ENCODE measurements at regions of chr4 and their contacts with region 1.

Region 1: GRCh38 chr4:72701987-72702819 is 133.2 kb upstream of the ADAMTS3 start:
- DNase-seq: peak in 2 of 9 experiments; percentile 41 to 51
- ATAC-seq: no peak
- H3K4me3 ChIP-seq: peak overlapping the region; percentile 21 to 25
- H3K4me3 Mint-ChIP-seq: peak overlapping the region; percentile 79
- H3K27ac ChIP-seq: no peak overlapping the region
- H3K27ac Mint-ChIP-seq: no peak overlapping the region
- H3K4me1 ChIP-seq: no peaks in the 10 kb centered on the region
- H3K4me1 Mint-ChIP-seq: peaks cover 3% of the 10 kb centered on the region
- H3K27me3 ChIP-seq: no peaks in the 10 kb centered on the region
- H3K27me3 Mint-ChIP-seq: peaks cover 2% of the 10 kb centered on the region
- CTCF ChIP-seq: no peak

Region 2: DNA sequence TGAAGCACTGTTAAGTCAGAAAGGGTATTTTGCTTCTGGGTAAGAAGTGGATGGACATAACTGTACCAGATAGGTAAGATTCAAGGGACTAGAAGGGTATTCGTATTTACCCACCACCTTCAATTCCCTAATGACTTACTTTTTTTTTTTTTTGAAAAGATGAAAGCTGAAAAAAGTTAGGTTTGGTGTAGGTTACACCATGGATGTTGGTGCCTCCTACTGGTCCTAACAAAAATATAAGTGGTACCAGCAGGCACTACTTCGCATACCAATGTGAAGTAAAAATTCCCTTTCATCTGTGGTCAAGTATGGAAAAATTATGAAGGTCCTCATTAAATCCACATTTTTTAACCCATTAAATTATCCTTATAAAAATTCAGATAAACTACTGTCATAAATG is 549.2 kb after region 1 on chr4:
- CTCF ChIA-PET with region 1: interaction called, 3 read pairs
- POLR2A ChIA-PET with region 1: no interaction called
- intact Hi-C with region 1: loop called in 1 of 2 experiments (anchors 5 kb)
- DNase-seq: peak in 1 of 9 experiments; percentile 17
- ATAC-seq: no peak
- H3K4me3 ChIP-seq: no peak overlapping the region
- H3K4me3 Mint-ChIP-seq: no peak overlapping the region
- H3K27ac ChIP-seq: no peak overlapping the region
- H3K27ac Mint-ChIP-seq: no peak overlapping the region
- H3K4me1 ChIP-seq: peaks cover 54% of the 10 kb centered on the region
- H3K4me1 Mint-ChIP-seq: peaks cover 72% of the 10 kb centered on the region
- H3K27me3 ChIP-seq: no peaks in the 10 kb centered on the region
- H3K27me3 Mint-ChIP-seq: no peaks in the 10 kb centered on the region
- CTCF ChIP-seq: no peak

Region 3: DNA sequence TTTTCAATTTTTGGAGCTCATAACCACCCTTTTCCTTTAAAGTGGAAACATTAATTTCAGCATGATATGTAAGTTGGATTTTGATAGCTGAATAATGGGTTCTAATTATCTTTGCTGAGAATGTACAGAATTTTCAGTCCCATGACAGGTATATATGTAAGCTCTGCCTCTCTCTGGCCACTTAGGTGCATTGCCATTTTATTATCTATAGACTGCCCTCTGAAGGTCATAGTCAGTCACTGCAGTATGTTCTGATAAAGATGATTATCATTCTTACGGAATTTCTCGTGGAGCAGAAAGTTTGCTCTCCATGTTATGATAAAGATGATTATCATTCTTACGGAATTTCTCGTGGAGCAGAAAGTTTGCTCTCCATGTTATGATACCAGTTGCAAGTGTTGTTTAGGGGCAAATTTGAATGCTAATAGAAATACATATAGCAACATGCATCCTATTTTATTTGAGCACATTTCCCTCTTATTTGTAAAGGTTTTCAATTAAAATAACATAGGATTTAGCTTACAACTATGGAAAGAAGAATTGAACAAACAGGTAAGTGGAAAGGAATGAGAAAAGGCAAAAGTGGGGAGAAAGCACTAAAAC is 744.2 kb after region 1 on chr4:
- CTCF ChIA-PET with region 1: no interaction called
- POLR2A ChIA-PET with region 1: no interaction called
- intact Hi-C with region 1: loop called (anchors 5 to 10 kb)
- DNase-seq: peak in 2 of 9 experiments; percentile 14 to 40
- ATAC-seq: peak; percentile 88
- H3K4me3 ChIP-seq: no peak overlapping the region
- H3K4me3 Mint-ChIP-seq: no peak overlapping the region
- H3K27ac ChIP-seq: no peak overlapping the region
- H3K27ac Mint-ChIP-seq: no peak overlapping the region
- H3K4me1 ChIP-seq: no peaks in the 10 kb centered on the region
- H3K4me1 Mint-ChIP-seq: no peaks in the 10 kb centered on the region
- H3K27me3 ChIP-seq: no peaks in the 10 kb centered on the region
- H3K27me3 Mint-ChIP-seq: peaks cover 6% of the 10 kb centered on the region
- CTCF ChIP-seq: peak; percentile 74